Common myeloid progenitor, CD34-positive (primary cell): ENCODE measurements at regions of chr2 and their contacts with region 1.

Region 1: GRCh38 chr2:135997380-135997779 is 12.0 kb upstream of the DARS1 start:
- DNase-seq: peak; percentile 57 to 74 (median 66)
- H3K4me3 ChIP-seq: no peak overlapping the region
- H3K27ac ChIP-seq: no peak overlapping the region
- H3K4me1 ChIP-seq: peaks cover 3 to 16% (median 10%) of the 10 kb centered on the region in 4 experiments
- H3K27me3 ChIP-seq: no peaks in the 10 kb centered on the region

Region 2: GRCh38 chr2:135985018-135985825 is 12.2 kb before region 1 on chr2 and contains the start of gene DARS1:
- CTCF ChIA-PET with region 1: interaction called, 35 read pairs
- POLR2A ChIA-PET with region 1: interaction called, 3 read pairs
- DNase-seq: peak; percentile 86 to 92 (median 90)
- H3K4me3 ChIP-seq: peak within 1 kb of the TSS; percentile 58 to 96 (median 90)
- H3K27ac ChIP-seq: peak within 1 kb of the TSS; percentile 91 to 96
- H3K4me1 ChIP-seq: peaks cover 14 to 42% (median 27%) of the 10 kb centered on the region in 4 experiments
- H3K27me3 ChIP-seq: no peaks in the 10 kb centered on the region

Region 3: GRCh38 chr2:136008205-136008865 is 11.0 kb after region 1 on chr2:
- CTCF ChIA-PET with region 1: interaction called, 31 read pairs
- POLR2A ChIA-PET with region 1: no interaction called
- DNase-seq: peak; percentile 97 to 100 (median 99)
- H3K4me3 ChIP-seq: peak overlapping the region in 1 of 7 experiments; percentile 28
- H3K27ac ChIP-seq: peak overlapping the region; percentile 78 to 92
- H3K4me1 ChIP-seq: peaks cover 34 to 62% (median 50%) of the 10 kb centered on the region in 4 experiments
- H3K27me3 ChIP-seq: no peaks in the 10 kb centered on the region

Region 4: DNA sequence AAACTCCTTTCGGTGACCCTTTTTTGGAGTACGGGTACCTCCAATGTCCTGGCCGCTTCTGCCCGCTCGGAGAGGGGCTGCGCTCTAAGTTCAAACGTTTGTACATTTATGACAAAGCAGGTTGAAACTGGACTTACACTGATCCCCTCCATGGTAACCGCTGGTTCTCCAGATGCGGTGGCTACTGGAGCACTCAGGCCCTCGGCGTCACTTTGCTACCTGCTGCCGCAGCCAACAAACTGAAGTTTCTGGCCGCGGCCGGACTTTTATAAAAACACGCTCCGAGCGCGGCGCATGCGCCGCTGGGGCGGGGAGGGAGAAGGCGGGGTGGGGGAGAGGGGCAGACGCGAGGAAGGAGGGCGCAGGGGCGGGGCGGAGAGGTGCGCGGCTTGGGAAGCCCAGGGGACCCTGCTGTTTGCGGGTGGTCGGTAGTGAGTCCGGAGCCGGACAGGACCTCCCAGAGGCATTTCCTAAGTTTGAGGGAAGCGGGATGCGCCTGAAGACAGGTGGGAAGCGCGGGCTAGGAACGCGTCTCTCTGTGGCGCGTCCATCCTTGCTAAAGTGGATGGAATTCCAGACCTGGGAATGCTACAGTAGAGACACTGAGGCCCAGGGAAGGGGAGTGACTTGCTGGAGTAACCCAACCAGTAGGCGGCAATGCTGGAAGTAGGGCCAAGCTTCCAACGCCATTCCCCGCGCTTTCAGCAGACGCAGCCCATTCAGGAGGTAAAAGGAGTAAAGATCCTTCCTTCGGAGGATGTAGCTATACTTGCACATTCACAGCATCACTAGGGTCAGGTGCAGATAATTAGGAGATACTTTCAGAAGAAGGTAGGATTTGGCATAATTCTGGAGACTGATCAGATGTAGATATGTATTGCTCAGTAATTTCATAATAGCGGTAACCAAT is 120.8 kb after region 1 on chr2 and contains the start of gene CXCR4:
- CTCF ChIA-PET with region 1: interaction called, 15 read pairs
- POLR2A ChIA-PET with region 1: interaction called, 5 read pairs
- DNase-seq: peak; percentile 73 to 82 (median 81)
- H3K4me3 ChIP-seq: peak within 1 kb of the TSS; percentile 61 to 91 (median 85)
- H3K27ac ChIP-seq: peak within 1 kb of the TSS; percentile 42 to 76
- H3K4me1 ChIP-seq: peaks cover 40 to 61% (median 53%) of the 10 kb centered on the region in 4 experiments
- H3K27me3 ChIP-seq: no peaks in the 10 kb centered on the region

Region 5: DNA sequence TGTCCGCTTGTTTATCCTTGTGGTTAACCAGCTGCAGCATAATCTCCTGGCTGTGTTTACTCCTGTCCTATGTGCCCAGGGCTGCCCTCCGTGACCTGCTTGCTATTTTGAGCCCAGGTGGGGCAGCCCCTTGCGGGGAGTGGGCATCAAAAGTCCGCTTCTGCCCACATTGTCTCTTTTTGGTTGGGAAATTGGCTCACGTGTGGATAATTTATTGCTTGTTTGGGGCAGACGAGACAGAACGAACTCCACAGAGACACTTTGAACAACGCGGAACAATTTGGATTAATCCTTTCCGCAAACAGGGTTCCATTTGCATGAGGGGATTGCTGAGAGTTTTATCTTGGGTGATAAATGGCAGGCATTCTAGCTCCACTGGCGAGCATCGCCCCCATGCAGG is 128.6 kb after region 1 on chr2:
- CTCF ChIA-PET with region 1: interaction called, 12 read pairs
- POLR2A ChIA-PET with region 1: no interaction called
- DNase-seq: no peak
- H3K4me3 ChIP-seq: peak overlapping the region in 1 of 7 experiments; percentile 19
- H3K27ac ChIP-seq: no peak overlapping the region
- H3K4me1 ChIP-seq: peaks cover 53 to 74% (median 59%) of the 10 kb centered on the region in 4 experiments
- H3K27me3 ChIP-seq: no peaks in the 10 kb centered on the region

Region 6: GRCh38 chr2:136378712-136379595 is 381.6 kb after region 1 on chr2:
- CTCF ChIA-PET with region 1: interaction called, 57 read pairs
- POLR2A ChIA-PET with region 1: no interaction called
- DNase-seq: peak; percentile 76 to 87 (median 80)
- H3K4me3 ChIP-seq: no peak overlapping the region
- H3K27ac ChIP-seq: no peak overlapping the region
- H3K4me1 ChIP-seq: peaks cover 14 to 25% (median 17%) of the 10 kb centered on the region in 4 experiments
- H3K27me3 ChIP-seq: no peaks in the 10 kb centered on the region

Region 7: GRCh38 chr2:136384531-136385303 is 387.3 kb after region 1 on chr2:
- CTCF ChIA-PET with region 1: interaction called, 57 read pairs
- POLR2A ChIA-PET with region 1: no interaction called
- DNase-seq: peak; percentile 60 to 83 (median 79)
- H3K4me3 ChIP-seq: peak overlapping the region in 1 of 7 experiments; percentile 52
- H3K27ac ChIP-seq: no peak overlapping the region
- H3K4me1 ChIP-seq: peaks cover 13 to 27% (median 19%) of the 10 kb centered on the region in 4 experiments
- H3K27me3 ChIP-seq: no peaks in the 10 kb centered on the region